Psoas muscle (tissue), 8 donors: ENCODE measurements at regions of chr20 and their contacts with region 1.

Region 1: GRCh38 chr20:43187476-43188233 is 2.1 kb downstream of the PTPRT start:
- DNase-seq: peak; percentile 59 to 74
- ATAC-seq: no peak
- H3K4me3 ChIP-seq: no peak overlapping the region
- H3K27ac ChIP-seq: no peak overlapping the region
- H3K4me1 ChIP-seq: no peaks in the 10 kb centered on the region
- H3K27me3 ChIP-seq: peaks cover 0 to 51% (median 16%) of the 10 kb centered on the region in 3 donors
- CTCF ChIP-seq: peak; percentile 88

Region 2: GRCh38 chr20:41738604-41739206 is 1449.0 kb before region 1 on chr20:
- intact Hi-C with region 1: loop called in 1 of 2 experiments (anchors 2 kb)
- DNase-seq: peak; percentile 25 to 63
- ATAC-seq: peak in 3 of 4 donors; percentile 54 to 63 (median 54)
- H3K4me3 ChIP-seq: no peak overlapping the region
- H3K27ac ChIP-seq: no peak overlapping the region
- H3K4me1 ChIP-seq: no peaks in the 10 kb centered on the region
- H3K27me3 ChIP-seq: no peaks in the 10 kb centered on the region
- CTCF ChIP-seq: peak; percentile 64

Region 3: DNA sequence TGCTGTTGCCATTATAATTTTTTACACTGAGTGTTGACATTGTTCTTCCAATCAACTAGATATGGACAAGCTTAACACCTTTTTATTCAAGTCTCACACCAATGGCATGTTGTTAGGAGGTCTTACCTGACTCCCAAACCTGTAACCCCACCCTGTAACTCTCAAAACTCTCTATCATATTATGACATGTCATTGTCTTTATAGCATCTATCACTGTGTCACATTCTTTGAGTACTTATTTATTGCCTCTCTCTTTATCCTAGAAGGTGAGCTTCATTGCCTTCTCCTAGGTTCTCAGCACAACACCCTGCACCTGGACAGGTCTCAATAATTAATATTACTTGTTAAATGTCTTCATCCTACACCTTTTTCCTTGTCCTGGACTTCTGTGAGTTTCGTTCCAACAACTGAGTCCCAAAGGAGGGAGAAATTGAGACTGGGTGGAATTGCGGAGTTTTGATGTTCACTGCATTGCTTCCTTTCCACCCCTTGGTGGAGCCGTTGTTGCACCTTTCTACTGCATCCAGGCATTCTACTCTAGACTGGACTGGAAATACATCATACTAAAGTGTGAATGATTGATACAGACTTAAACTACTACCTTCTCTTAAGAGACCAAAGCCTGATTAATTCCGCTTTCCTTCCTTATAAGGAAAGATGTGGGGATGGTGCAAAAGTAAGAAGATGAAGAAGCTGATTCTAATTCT is 1231.5 kb before region 1 on chr20:
- intact Hi-C with region 1: loop called in 1 of 2 experiments (anchors 5 kb)
- DNase-seq: no peak
- ATAC-seq: no peak
- H3K4me3 ChIP-seq: no peak overlapping the region
- H3K27ac ChIP-seq: no peak overlapping the region
- H3K4me1 ChIP-seq: no peaks in the 10 kb centered on the region
- H3K27me3 ChIP-seq: no peaks in the 10 kb centered on the region
- CTCF ChIP-seq: peak; percentile 23

Region 4: DNA sequence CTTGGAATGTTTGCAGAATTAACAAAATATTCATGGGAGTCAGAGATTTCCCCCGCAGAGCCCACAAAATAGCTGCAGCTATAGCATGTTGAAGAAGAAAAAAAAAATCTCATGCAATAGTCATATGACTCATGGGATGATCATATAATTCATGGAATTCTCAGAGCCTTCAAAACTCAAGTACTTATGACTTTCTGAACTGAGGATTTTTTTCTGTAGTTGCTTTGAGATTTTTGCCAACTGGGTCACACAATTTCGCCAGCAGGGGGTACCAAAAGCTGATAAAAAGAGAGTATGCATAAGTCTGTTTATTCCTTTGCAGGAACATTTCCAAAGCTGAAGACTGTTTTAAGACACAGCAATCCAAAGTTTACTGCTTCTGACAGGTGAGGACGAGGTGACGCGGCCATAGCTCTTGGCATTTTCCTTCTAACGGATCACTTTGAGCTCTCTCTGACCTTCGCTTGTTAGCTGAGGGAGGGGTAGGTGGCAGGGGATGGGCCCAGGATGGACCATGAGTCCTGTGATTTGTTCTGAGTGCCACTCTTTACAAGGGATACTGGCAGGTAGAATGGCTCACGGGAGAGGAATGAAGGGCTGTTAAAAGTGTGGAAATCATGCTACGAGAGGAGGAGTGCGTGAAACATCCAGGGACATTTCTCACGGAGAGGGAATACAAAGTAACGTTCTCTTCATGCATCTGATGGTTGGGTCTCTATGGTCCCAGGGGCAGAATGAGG is 983.3 kb before region 1 on chr20:
- intact Hi-C with region 1: loop called in 1 of 2 experiments (anchors 10 kb)
- DNase-seq: no peak
- ATAC-seq: no peak
- H3K4me3 ChIP-seq: no peak overlapping the region
- H3K27ac ChIP-seq: no peak overlapping the region
- H3K4me1 ChIP-seq: no peaks in the 10 kb centered on the region
- H3K27me3 ChIP-seq: no peaks in the 10 kb centered on the region
- CTCF ChIP-seq: peak; percentile 29